GM12878 (cell line): ENCODE measurements at regions of chrX and their contacts with region 1.

Region 1: DNA sequence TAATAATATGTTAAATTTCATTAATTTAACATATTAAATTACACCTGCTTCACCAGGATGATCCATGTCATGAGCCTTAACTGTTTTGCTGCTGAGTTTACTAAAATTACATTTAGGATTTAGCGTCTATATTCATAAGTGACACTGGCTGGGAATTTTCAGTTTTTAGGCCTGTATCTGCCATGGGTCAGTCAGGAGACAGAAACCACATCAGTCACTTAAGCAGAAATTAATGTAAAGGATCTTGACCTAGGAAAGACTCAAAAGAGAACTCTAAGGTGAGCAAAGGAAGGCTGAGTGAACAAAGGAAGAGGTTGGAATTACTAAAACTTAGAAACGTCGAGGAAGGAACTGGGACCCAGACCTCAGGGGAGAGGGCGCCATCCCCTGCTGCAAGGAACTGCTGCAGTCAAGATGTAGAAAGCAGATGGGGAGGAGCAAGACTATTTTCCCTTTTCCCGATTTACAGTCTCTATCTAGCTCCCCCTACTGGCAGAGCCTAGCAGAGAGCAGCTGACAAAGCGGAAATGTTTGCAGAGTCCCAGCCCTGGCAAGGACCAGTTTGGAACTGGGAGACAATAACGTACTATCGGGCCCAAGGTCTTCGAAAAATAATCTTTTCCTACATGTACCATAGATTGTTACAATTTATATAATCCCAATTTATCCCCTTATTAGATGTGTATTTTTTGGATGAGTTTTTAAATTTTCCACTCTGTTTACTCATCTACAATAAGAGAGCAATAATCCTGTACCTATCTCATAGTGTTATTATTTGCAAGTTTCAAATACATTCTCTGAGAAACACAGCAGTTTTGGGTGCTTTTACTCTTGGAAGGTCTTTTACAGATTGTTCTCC is 22.6 kb upstream of the RBBP7 start:
- DNase-seq: peak; percentile 25
- ATAC-seq: peak; percentile 95
- H3K4me3 ChIP-seq: no peak overlapping the region
- H3K27ac ChIP-seq: no peak overlapping the region
- H3K4me1 ChIP-seq: peaks cover 3% of the 10 kb centered on the region; the same call in 1 of the 2 replicates
- H3K27me3 ChIP-seq: 0 out of 4 replicates have a peak, but pooled peaks cover 0 to 2% of the 10 kb centered on the region in 2 experiments
- CTCF ChIP-seq: peak; percentile 85 to 98 (median 91)
- EP300 ChIP-seq: no peak
- POLR2A ChIP-seq: no peak
- RAD21 ChIP-seq: peak; percentile 61

Region 2: DNA sequence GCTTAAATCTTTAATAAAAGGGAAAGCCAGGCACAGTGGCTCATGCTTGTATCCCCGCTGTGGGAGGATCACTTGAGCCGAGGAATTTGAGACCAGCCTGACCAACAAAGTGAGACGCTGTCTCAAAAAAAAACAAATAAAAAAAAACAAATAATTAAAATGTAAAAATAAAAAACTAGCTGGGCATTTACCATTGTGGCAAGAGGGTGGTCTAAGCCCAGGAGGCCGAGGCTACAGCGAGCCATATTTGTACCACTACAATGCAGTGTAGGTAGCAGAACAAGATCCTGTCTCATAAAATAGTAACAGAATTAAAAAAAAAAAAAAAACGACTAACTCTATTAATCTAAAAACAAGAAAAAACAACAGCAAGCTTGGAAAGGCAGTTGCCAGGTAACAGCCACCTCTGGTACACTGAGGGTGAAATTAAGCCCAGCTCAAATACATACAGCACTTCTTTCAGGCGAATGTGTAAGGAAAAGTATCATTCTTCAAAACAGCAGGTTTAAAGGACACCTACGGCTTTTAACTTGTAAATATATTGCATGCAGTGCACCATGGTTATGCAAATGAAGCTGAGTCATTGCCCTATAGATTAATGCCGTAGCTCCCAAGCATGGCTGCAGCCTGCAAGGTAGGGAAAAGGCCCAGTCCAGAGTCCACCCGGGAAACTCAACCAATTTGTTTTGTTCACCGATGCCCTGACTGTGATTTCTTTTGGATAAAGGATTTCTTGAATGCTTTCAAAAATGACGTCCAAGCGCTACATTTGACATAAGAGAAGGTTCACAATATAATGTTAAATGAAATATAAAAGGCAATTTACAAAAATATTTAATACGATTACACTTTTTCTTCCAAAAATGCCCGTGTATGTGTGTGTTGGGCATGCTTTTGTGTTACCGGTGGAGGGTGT is 121.0 kb before region 1 on chrX:
- CTCF ChIA-PET with region 1: no interaction called
- POLR2A ChIA-PET with region 1: no interaction called
- RAD21 ChIA-PET with region 1: no interaction called
- SMC1A ChIA-PET with region 1: no interaction called
- in situ Hi-C with region 1: no loop called
- intact Hi-C with region 1: no loop called
- DNase-seq: no peak
- ATAC-seq: peak; percentile 79
- H3K4me3 ChIP-seq: no peak overlapping the region
- H3K27ac ChIP-seq: no peak overlapping the region
- H3K4me1 ChIP-seq: no peaks in the 10 kb centered on the region
- H3K27me3 ChIP-seq: no peaks in the 10 kb centered on the region
- CTCF ChIP-seq: no peak
- EP300 ChIP-seq: no peak
- POLR2A ChIP-seq: peak; percentile 49; the same call in 1 of the 2 replicates
- RAD21 ChIP-seq: no peak

Region 3: DNA sequence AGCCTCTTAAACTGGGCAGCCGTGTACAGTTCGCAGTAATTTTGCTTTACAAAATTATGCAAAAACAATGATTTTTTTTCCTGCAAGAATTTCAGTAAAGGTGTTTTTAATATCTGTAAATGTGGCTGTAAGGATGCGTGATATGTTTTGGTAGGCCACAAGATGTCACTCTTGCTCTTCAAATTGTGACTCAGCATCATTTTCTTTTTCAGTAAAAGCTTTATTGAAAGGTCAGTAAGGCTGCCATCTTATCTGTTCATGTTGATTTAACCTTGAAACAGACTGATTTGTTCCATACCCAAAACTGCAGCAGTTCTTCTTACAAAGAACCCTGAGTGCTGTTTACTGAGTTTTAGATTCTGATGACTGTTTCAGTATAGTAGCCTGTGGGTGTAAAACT is 66.5 kb before region 1 on chrX:
- CTCF ChIA-PET with region 1: interaction called, 11 read pairs
- POLR2A ChIA-PET with region 1: no interaction called
- RAD21 ChIA-PET with region 1: interaction called, 5 read pairs
- SMC1A ChIA-PET with region 1: no interaction called
- in situ Hi-C with region 1: no loop called
- intact Hi-C with region 1: loop called (anchors 1 kb)
- DNase-seq: no peak
- ATAC-seq: peak; percentile 76
- H3K4me3 ChIP-seq: no peak overlapping the region
- H3K27ac ChIP-seq: no peak overlapping the region
- H3K4me1 ChIP-seq: no peaks in the 10 kb centered on the region
- H3K27me3 ChIP-seq: no peaks in the 10 kb centered on the region
- CTCF ChIP-seq: peak; percentile 37 to 68 (median 60); a peak in 5 of 6 replicates
- EP300 ChIP-seq: no peak
- POLR2A ChIP-seq: no peak
- RAD21 ChIP-seq: peak; percentile 65

Region 4: DNA sequence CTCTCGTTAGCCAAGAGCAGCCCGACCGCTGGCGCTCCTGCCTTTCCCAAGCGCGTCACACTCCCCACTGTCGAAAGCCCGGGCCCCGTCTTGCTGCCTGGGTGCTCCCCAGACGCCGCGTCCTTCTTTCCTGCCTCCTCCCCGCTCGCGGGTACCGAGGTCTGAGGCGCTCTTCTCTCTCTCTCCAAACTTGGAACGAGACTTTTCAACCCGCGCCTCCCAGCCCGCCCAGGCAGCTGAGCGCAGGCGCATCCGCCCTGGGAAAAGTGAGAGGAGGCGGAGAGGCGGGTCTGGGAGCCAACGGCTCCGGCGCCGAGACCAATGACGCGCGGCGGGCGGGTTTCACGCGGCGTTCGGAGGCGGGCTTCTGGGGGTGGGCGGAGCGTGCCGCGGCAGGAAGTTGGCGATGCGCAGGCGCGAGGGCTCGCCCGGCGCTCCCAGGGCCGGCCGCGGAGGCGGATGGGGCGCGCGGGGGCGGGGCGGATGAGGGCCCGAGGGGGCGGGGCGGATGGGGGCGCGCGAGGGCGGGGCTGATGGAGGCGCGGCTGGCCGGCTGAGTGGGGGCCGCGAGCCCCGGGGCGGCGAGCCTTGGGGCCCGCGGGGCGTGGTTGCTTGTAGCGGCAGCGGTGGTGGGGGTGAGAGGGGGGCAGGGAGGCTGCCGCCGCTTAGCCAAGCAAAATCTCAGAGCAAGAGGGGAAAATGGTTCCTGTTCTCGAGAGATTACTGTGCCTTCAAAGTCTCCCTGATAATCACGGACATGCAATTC is 22.5 kb before region 1 on chrX and contains the start of gene RBBP7:
- CTCF ChIA-PET with region 1: interaction called, 14 read pairs
- POLR2A ChIA-PET with region 1: no interaction called
- RAD21 ChIA-PET with region 1: interaction called, 3 read pairs
- SMC1A ChIA-PET with region 1: interaction called, 3 read pairs
- in situ Hi-C with region 1: no loop called
- intact Hi-C with region 1: no loop called
- DNase-seq: peak; percentile 57
- ATAC-seq: peak; percentile 89
- H3K4me3 ChIP-seq: peak within 1 kb of the TSS; percentile 93
- H3K27ac ChIP-seq: peak within 1 kb of the TSS; percentile 92
- H3K4me1 ChIP-seq: peaks cover 7% of the 10 kb centered on the region
- H3K27me3 ChIP-seq: peaks cover 0 to 6% of the 10 kb centered on the region in 2 experiments; a peak in 1 of 4 replicates
- CTCF ChIP-seq: no peak
- EP300 ChIP-seq: no peak
- POLR2A ChIP-seq: peak; percentile 84
- RAD21 ChIP-seq: no peak
- polyA plus RNA-seq, gene RBBP7: 95.3 to 155 TPM

Region 5: GRCh38 chrX:16903274-16904022 is 10.7 kb after region 1 on chrX:
- CTCF ChIA-PET with region 1: interaction called, 37 read pairs
- POLR2A ChIA-PET with region 1: interaction called, 4 read pairs
- RAD21 ChIA-PET with region 1: interaction called, 4 read pairs
- SMC1A ChIA-PET with region 1: interaction called, 9 read pairs
- in situ Hi-C with region 1: no loop called
- intact Hi-C with region 1: no loop called
- DNase-seq: peak; percentile 15
- ATAC-seq: peak; percentile 84
- H3K4me3 ChIP-seq: no peak overlapping the region
- H3K27ac ChIP-seq: peak overlapping the region; percentile 74
- H3K4me1 ChIP-seq: peaks cover 8% of the 10 kb centered on the region
- H3K27me3 ChIP-seq: no peaks in the 10 kb centered on the region
- CTCF ChIP-seq: no peak
- EP300 ChIP-seq: peak; percentile 30 to 36; a peak in 1 of 4 replicates
- POLR2A ChIP-seq: no peak
- RAD21 ChIP-seq: no peak

Region 6: DNA sequence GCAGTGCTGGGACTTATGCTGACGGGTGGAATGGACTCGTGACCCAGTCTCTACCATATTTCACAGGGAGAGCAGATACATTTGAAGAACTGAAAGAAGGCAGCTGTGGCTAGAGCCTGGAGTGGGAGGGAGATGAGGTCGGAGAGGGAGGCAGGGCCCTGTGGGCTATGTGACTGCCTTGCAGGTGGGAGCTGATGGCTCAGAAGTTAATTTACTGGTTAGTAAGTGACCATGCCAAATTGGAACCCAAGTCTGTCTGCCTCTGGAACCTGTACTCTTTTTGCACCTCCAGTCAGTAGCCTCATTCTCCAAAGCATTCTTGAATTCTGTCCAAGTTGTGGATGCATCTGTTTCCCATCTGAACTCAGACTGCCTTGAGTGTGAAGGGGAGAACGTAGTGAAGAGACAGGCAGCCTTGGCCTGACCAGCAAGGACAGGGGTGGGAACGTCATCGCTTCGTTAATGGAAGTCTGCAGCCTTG is 146.0 kb after region 1 on chrX:
- CTCF ChIA-PET with region 1: interaction called, 205 read pairs
- POLR2A ChIA-PET with region 1: no interaction called
- RAD21 ChIA-PET with region 1: no interaction called
- SMC1A ChIA-PET with region 1: interaction called, 109 read pairs
- in situ Hi-C with region 1: loop called (anchors 5 kb)
- intact Hi-C with region 1: no loop called
- DNase-seq: no peak
- ATAC-seq: peak; percentile 89
- H3K4me3 ChIP-seq: no peak overlapping the region
- H3K27ac ChIP-seq: no peak overlapping the region
- H3K4me1 ChIP-seq: no peaks in the 10 kb centered on the region
- H3K27me3 ChIP-seq: 0 out of 4 replicates have a peak, but pooled peaks cover 0 to 2% of the 10 kb centered on the region in 2 experiments
- CTCF ChIP-seq: no peak
- EP300 ChIP-seq: no peak
- POLR2A ChIP-seq: no peak
- RAD21 ChIP-seq: no peak

Region 7: DNA sequence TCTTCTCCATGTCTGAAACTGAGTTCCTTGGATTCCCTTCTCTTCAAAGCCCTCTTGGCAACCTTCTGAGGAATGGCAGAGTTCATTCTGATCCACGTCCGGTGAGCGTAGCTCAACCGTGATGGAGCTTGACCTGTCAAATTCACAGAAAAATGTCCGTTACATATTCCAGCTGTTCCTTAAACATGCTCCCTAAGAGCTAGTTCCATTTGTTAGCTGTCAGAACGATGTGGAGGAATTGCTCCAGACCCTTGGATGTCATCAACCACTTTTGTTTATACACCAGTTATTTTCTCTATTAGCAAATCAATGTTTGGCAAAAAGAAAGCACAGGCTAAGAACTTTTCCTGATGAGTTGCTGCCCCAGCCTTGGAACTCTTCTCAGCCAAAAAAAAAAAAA is 532.4 kb after region 1 on chrX:
- CTCF ChIA-PET with region 1: no interaction called
- POLR2A ChIA-PET with region 1: no interaction called
- RAD21 ChIA-PET with region 1: no interaction called
- SMC1A ChIA-PET with region 1: no interaction called
- in situ Hi-C with region 1: no loop called
- intact Hi-C with region 1: no loop called
- DNase-seq: no peak
- ATAC-seq: no peak
- H3K4me3 ChIP-seq: no peak overlapping the region
- H3K27ac ChIP-seq: no peak overlapping the region
- H3K4me1 ChIP-seq: no peaks in the 10 kb centered on the region
- H3K27me3 ChIP-seq: peaks cover 0 to 1% of the 10 kb centered on the region in 2 experiments; a peak in 1 of 4 replicates
- CTCF ChIP-seq: no peak
- EP300 ChIP-seq: no peak
- POLR2A ChIP-seq: no peak
- RAD21 ChIP-seq: no peak